Activated CD8-positive, alpha-beta T cell treated with anti-CD3 and anti-CD28 coated beads for 36 hours (primary cell): ENCODE measurements at regions of chr15 and their contacts with region 1.

Region 1: GRCh38 chr15:73908030-73908821 is 18.0 kb upstream of the LOXL1 start:
- DNase-seq: peak; percentile 91
- ATAC-seq: peak; percentile 99
- H3K4me3 Mint-ChIP-seq: no peak overlapping the region
- H3K27ac Mint-ChIP-seq: no peak overlapping the region
- H3K4me1 Mint-ChIP-seq: no peaks in the 10 kb centered on the region
- H3K27me3 Mint-ChIP-seq: no peaks in the 10 kb centered on the region
- CTCF ChIP-seq: peak; percentile 85

Region 2: GRCh38 chr15:73897441-73898261 is 10.6 kb before region 1 on chr15:
- CTCF ChIA-PET with region 1: interaction called, 23 read pairs
- POLR2A ChIA-PET with region 1: no interaction called
- intact Hi-C with region 1: no loop called
- DNase-seq: peak; percentile 74
- ATAC-seq: peak; percentile 97
- H3K4me3 Mint-ChIP-seq: no peak overlapping the region
- H3K27ac Mint-ChIP-seq: no peak overlapping the region
- H3K4me1 Mint-ChIP-seq: no peaks in the 10 kb centered on the region
- H3K27me3 Mint-ChIP-seq: no peaks in the 10 kb centered on the region
- CTCF ChIP-seq: peak; percentile 97